ENCODE measurements at regions of chr1 and their contacts with region 1.

Region 1: GRCh38 chr1:70221241-70222121 is at the start of gene SRSF11:
- DNase-seq: peak; percentile 95 to 98 (median 98)
- ATAC-seq: peak; percentile 94
- H3K4me3 ChIP-seq: peak within 1 kb of the TSS; percentile 82 to 91
- H3K4me3 Mint-ChIP-seq: peak within 1 kb of the TSS; percentile 94
- H3K27ac ChIP-seq: peak within 1 kb of the TSS; percentile 96 to 97
- H3K27ac Mint-ChIP-seq: peak within 1 kb of the TSS; percentile 99
- H3K4me1 ChIP-seq: peaks cover 43% of the 10 kb centered on the region
- H3K4me1 Mint-ChIP-seq: peaks cover 48% of the 10 kb centered on the region
- H3K27me3 ChIP-seq: no peaks in the 10 kb centered on the region
- H3K27me3 Mint-ChIP-seq: no peaks in the 10 kb centered on the region
- CTCF ChIP-seq: no peak
- total RNA-seq, gene SRSF11: 427 to 456 TPM

Region 2: GRCh38 chr1:70205434-70206118 is 15.9 kb before region 1 on chr1 and contains the start of gene LRRC40:
- CTCF ChIA-PET with region 1: interaction called, 7 read pairs
- POLR2A ChIA-PET with region 1: interaction called, 61 read pairs
- intact Hi-C with region 1: loop called (anchors 1 kb)
- DNase-seq: peak; percentile 91 to 98 (median 96)
- ATAC-seq: peak; percentile 95
- H3K4me3 ChIP-seq: peak within 1 kb of the TSS; percentile 75 to 83
- H3K4me3 Mint-ChIP-seq: peak within 1 kb of the TSS; percentile 92
- H3K27ac ChIP-seq: peak within 1 kb of the TSS; percentile 88 to 97
- H3K27ac Mint-ChIP-seq: peak within 1 kb of the TSS; percentile 99
- H3K4me1 ChIP-seq: peaks cover 48% of the 10 kb centered on the region
- H3K4me1 Mint-ChIP-seq: peaks cover 76% of the 10 kb centered on the region
- H3K27me3 ChIP-seq: no peaks in the 10 kb centered on the region
- H3K27me3 Mint-ChIP-seq: no peaks in the 10 kb centered on the region
- CTCF ChIP-seq: no peak
- total RNA-seq, gene LRRC40: 13.7 to 15.4 TPM